HEK293 (cell line): ENCODE measurements at regions of chrX and their contacts with region 1.

Region 1: GRCh38 chrX:71118032-71118984 is at the start of gene MED12:
- H3K4me3 ChIP-seq: peak within 1 kb of the TSS; percentile 64
- H3K27ac ChIP-seq: peak within 1 kb of the TSS; percentile 72
- H3K4me1 ChIP-seq: no peaks in the 10 kb centered on the region
- CTCF ChIP-seq: no peak

Region 2: DNA sequence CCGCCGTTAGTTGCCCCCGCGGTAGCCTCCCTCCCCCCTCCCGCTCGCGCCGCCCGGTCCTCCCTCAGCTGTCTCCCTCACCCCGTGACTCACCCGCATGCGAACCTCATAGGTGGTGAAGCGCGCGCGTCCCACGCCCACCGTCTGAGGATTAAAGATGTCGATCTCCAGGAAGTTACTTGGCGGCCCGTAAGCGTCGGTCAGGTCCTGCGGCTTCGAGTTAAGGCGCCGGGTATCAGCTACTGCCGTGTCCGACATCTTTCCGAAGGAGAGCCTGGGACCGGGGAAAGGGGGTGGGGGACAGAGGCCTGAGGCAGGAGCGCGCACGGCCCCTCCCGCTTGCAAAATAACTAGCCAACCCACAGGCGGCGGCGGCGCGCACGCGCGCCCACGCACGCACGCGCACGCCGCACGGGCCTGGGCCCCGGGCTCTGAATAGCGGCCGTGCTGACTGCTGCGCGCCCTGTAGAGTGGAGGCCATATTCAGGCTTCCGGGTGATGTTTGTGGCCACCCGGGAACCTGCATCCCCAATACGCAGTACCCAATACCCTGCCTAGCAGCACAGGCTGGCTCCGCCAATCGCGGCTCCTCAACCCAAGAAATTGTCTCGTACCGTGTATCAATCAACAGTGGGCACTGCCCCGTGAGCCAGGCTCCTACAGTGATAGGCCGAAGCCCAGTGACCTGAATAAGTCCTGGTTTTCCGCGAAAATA is 50.1 kb before region 1 on chrX and contains the start of gene SNX12:
- CTCF ChIA-PET with region 1: no interaction called
- POLR2A ChIA-PET with region 1: interaction called, 11 read pairs
- H3K4me3 ChIP-seq: peak within 1 kb of the TSS; percentile 68
- H3K27ac ChIP-seq: peak within 1 kb of the TSS; percentile 77
- H3K4me1 ChIP-seq: no peaks in the 10 kb centered on the region
- CTCF ChIP-seq: no peak

Region 3: GRCh38 chrX:71103110-71103983 is 15.0 kb before region 1 on chrX:
- CTCF ChIA-PET with region 1: no interaction called
- POLR2A ChIA-PET with region 1: interaction called, 16 read pairs
- H3K4me3 ChIP-seq: no peak overlapping the region
- H3K27ac ChIP-seq: peak overlapping the region; percentile 32
- H3K4me1 ChIP-seq: 0 out of 2 replicates have a peak, but pooled peaks cover 3% of the 10 kb centered on the region
- CTCF ChIP-seq: no peak

Region 4: GRCh38 chrX:71128915-71129765 is 10.8 kb after region 1 on chrX:
- CTCF ChIA-PET with region 1: interaction called, 24 read pairs
- POLR2A ChIA-PET with region 1: interaction called, 4 read pairs
- H3K4me3 ChIP-seq: no peak overlapping the region
- H3K27ac ChIP-seq: no peak overlapping the region
- H3K4me1 ChIP-seq: no peaks in the 10 kb centered on the region
- CTCF ChIP-seq: peak; percentile 83

Region 5: DNA sequence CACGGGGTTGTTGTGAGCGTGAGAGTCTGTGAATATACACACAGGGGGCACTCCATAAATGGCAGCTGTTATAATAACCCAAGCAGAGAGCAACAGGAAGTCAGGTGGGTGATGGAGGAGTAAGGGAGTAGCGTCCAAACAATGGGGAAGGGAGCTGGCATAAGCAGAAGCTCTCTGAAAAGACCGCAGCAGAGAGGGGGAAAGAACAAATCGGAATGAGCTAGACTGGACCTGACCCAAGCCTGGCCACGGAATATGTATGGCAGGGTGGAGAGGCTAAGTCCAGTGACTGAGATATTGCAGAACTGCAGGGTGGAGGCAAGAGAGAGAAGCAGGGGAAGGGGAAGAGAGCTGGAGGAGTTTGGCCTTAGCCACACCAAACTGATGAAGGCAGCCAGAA is 98.2 kb after region 1 on chrX:
- CTCF ChIA-PET with region 1: no interaction called
- POLR2A ChIA-PET with region 1: no interaction called
- H3K4me3 ChIP-seq: no peak overlapping the region
- H3K27ac ChIP-seq: no peak overlapping the region
- H3K4me1 ChIP-seq: no peaks in the 10 kb centered on the region
- CTCF ChIP-seq: no peak